ENCODE measurements at regions of chr6 and their contacts with region 1.

Region 1: GRCh38 chr6:106085984-106086813 is at the start of gene PRDM1:
- DNase-seq: peak; percentile 78
- ATAC-seq: peak; percentile 77
- H3K4me3 ChIP-seq: peak within 1 kb of the TSS; percentile 70
- H3K27ac ChIP-seq: peak within 1 kb of the TSS; percentile 78
- H3K4me1 ChIP-seq: peaks cover 23% of the 10 kb centered on the region
- H3K27me3 ChIP-seq: peaks cover 0 to under 1% of the 10 kb centered on the region in 2 experiments; a peak in 2 of 4 replicates
- CTCF ChIP-seq: peak; percentile 35 to 41 (median 41); a peak in 4 of 6 replicates
- EP300 ChIP-seq: no peak
- POLR2A ChIP-seq: peak; percentile 82
- RAD21 ChIP-seq: peak; percentile 38
- polyA plus RNA-seq, gene PRDM1: 1.9 to 2.8 TPM

Region 2: DNA sequence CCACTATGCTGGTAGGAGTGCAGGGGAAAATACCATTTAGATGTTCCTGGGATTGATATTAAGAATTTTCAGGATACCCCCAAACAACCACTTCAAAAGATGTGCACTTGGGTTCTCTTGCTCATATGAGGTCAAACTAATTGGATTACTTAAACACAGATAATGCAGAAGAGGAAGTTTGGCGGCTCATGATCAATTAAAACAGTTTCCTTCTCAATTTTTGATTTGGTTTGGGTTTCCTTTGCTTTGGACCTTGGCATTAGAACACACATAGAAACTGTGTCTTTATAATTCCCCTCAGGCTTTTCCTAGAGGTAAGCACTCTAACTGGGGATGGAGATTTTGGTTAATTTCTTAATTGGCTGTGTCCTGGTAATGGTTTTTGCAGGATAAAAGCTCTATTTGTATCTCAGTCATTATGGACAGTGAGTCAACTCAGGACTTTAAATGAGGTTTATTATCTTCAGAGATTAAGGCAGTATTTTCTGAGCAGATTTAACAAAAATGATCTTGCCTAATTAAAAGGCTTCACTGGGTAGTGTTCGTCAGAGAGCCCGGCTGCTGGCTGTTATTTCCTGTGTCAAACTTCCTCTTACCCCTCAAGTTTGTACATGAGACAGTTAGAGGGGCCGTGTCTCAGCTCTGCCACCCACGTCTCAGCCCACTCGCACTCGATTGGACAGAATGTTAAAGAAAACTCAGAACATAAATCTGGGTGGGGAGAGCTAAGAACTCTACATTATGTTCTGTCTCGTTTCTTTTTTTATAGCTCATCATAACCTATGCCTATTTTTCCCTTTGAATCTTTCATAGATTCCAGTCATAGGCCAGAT is 633.1 kb before region 1 on chr6:
- CTCF ChIA-PET with region 1: interaction called, 6 read pairs
- POLR2A ChIA-PET with region 1: interaction called, 3 read pairs
- RAD21 ChIA-PET with region 1: interaction called, 11 read pairs
- SMC1A ChIA-PET with region 1: interaction called, 15 read pairs
- in situ Hi-C with region 1: no loop called
- intact Hi-C with region 1: no loop called
- DNase-seq: peak; percentile 54
- ATAC-seq: peak; percentile 89
- H3K4me3 ChIP-seq: no peak overlapping the region
- H3K27ac ChIP-seq: peak overlapping the region; percentile 35
- H3K4me1 ChIP-seq: peaks cover 15% of the 10 kb centered on the region
- H3K27me3 ChIP-seq: no peaks in the 10 kb centered on the region
- CTCF ChIP-seq: no peak
- EP300 ChIP-seq: peak; percentile 49 to 63; a peak in 3 of 4 replicates
- POLR2A ChIP-seq: no peak
- RAD21 ChIP-seq: no peak

Region 3: GRCh38 chr6:105733565-105734162 is 352.5 kb before region 1 on chr6:
- CTCF ChIA-PET with region 1: interaction called, 5 read pairs
- POLR2A ChIA-PET with region 1: no interaction called
- RAD21 ChIA-PET with region 1: interaction called, 5 read pairs
- SMC1A ChIA-PET with region 1: interaction called, 6 read pairs
- in situ Hi-C with region 1: loop called (anchors 10 kb)
- intact Hi-C with region 1: loop called (anchors 2 kb)
- DNase-seq: no peak
- ATAC-seq: peak; percentile 41; the same call in 1 of the 3 replicates
- H3K4me3 ChIP-seq: no peak overlapping the region
- H3K27ac ChIP-seq: no peak overlapping the region
- H3K4me1 ChIP-seq: no peaks in the 10 kb centered on the region
- H3K27me3 ChIP-seq: no peaks in the 10 kb centered on the region
- CTCF ChIP-seq: peak; percentile 48 to 52 (median 50); a peak in 5 of 6 replicates
- EP300 ChIP-seq: no peak
- POLR2A ChIP-seq: no peak
- RAD21 ChIP-seq: peak; percentile 56

Region 4: DNA sequence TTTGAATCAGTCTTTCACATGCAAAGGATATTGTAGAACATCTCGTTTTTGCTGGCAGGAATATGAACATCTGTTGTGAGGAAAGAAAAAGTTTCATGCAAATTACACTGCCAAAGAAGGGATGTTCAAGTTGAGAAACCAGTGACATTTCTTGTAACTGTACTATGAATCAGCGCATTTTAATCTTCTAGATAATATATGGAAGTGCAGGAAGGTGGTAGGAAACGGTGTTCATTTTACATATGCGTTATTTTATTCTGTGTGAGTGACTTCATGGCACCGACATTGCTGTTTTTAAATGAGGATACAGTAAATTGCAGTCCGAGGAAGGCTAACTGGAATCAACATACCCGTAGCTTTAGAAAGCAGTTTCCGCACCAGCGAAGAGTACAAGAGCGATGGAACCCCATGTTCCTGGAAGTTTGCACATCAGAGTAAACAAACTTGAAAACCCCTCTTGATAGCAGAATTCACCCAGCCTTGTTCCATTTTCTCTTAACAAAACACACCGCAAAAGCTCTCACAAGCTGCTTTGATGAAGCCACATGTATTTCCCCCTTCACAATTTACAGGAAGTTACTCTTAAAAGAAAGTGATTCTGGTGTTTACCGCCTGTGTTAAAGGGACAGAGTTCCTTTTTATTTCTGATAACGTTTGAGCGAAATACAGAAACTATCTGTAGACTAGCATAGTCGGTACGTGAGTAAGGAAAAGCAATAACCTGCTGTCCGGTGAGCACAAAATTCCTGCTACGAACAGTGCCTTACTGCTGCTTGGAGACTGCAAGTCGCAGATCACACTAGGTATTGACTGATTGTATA is 11.4 kb after region 1 on chr6:
- CTCF ChIA-PET with region 1: interaction called, 13 read pairs
- POLR2A ChIA-PET with region 1: interaction called, 6 read pairs
- RAD21 ChIA-PET with region 1: interaction called, 18 read pairs
- SMC1A ChIA-PET with region 1: interaction called, 42 read pairs
- in situ Hi-C with region 1: no loop called
- intact Hi-C with region 1: no loop called
- DNase-seq: peak; percentile 78
- ATAC-seq: peak; percentile 68
- H3K4me3 ChIP-seq: peak overlapping the region; percentile 72
- H3K27ac ChIP-seq: peak overlapping the region; percentile 80
- H3K4me1 ChIP-seq: peaks cover 34% of the 10 kb centered on the region
- H3K27me3 ChIP-seq: no peaks in the 10 kb centered on the region
- CTCF ChIP-seq: no peak
- EP300 ChIP-seq: peak; percentile 65 to 68
- POLR2A ChIP-seq: no peak
- RAD21 ChIP-seq: no peak

Region 5: DNA sequence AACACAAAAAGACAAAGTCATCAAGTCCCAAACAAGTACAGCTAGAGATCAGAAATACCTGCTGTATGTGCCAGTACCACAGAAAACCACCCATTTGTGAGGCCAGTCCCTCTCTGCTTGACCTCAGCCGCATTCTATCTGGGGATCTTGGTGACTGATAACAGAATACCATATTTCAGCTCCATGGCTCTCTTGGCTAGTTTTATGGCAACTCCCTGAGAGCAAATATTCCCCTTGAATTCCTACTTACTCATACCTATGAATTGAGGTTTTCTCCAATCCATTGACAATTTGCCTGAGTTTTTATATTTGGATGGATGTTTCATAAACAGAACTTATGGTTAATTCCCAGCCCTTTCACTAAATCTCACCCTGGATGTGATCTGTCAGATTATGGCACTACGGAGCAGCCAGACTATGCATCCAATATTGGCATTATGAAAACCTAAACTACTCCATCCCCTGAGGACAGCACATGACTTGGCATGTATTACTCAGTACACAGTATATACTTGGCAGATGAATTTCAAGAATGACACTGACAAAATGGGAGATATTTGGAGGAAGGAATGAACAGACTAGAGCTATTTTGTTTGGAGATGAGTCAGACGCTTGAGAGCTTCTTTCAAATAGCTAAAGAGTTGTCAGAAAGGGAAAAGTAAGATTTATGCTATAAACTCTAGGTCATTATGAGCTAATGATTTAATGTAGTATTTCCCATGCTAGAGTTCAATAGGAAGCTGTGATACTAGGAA is 95.6 kb after region 1 on chr6:
- CTCF ChIA-PET with region 1: interaction called, 13 read pairs
- POLR2A ChIA-PET with region 1: no interaction called
- RAD21 ChIA-PET with region 1: interaction called, 9 read pairs
- SMC1A ChIA-PET with region 1: interaction called, 19 read pairs
- in situ Hi-C with region 1: no loop called
- intact Hi-C with region 1: no loop called
- DNase-seq: peak; percentile 40
- ATAC-seq: peak; percentile 57
- H3K4me3 ChIP-seq: no peak overlapping the region
- H3K27ac ChIP-seq: peak overlapping the region; percentile 74
- H3K4me1 ChIP-seq: peaks cover 45% of the 10 kb centered on the region
- H3K27me3 ChIP-seq: no peaks in the 10 kb centered on the region
- CTCF ChIP-seq: no peak
- EP300 ChIP-seq: no peak
- POLR2A ChIP-seq: no peak
- RAD21 ChIP-seq: no peak

Region 6: GRCh38 chr6:106318851-106319250 is 232.7 kb after region 1 on chr6:
- CTCF ChIA-PET with region 1: interaction called, 10 read pairs
- POLR2A ChIA-PET with region 1: no interaction called
- RAD21 ChIA-PET with region 1: interaction called, 4 read pairs
- SMC1A ChIA-PET with region 1: interaction called, 4 read pairs
- in situ Hi-C with region 1: no loop called
- intact Hi-C with region 1: no loop called
- DNase-seq: no peak
- ATAC-seq: peak; percentile 50; the same call in 2 of the 3 replicates
- H3K4me3 ChIP-seq: no peak overlapping the region
- H3K27ac ChIP-seq: no peak overlapping the region
- H3K4me1 ChIP-seq: peaks cover 16% of the 10 kb centered on the region
- H3K27me3 ChIP-seq: no peaks in the 10 kb centered on the region
- CTCF ChIP-seq: no peak
- EP300 ChIP-seq: no peak
- POLR2A ChIP-seq: no peak
- RAD21 ChIP-seq: no peak

Measured in GM12878 (cell line).